HCT116 (cell line): ENCODE measurements at regions of chr11 and their contacts with region 1.

Region 1: DNA sequence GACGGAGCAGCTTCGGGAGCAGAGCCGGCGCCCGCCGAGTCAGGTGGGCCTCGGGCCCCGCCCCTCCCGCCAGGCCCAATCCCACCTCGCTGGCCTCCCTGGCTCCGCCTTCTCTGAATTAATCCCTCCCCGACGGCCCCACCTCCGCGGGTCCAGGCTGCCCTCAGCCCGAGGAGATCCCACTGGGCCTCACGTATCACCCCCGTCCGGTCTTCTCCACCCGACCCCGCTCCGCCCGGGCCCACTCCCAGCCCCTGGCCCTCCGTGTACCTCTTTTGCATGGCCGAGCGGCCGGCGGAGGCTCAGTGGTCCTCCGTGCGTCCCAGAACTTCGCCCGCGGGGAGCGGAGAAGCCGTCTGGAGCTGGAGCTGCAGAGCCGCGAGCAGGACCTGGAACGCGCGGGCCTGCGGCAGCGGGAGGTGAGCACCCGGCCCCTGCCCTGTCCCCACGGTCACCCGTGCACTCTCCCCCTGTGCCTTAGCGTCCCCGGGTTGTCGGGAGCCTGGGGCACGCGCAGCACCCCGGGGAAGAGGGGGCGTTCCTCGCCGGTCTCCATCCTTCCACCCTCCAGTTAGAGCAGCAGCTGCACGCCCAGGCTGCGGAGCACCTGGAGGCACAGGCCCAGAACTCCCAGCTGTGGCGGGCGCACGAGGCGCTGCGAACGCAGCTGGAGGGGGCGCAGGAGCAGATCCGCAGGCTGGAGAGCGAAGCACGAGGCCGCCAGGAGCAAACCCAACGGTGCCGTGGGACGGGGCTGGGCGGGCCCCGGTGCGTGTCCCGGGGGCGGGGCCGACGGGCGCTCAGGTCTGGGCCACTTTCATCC is 2.2 kb upstream of the CD151 start:
- DNase-seq: no peak
- ATAC-seq: no peak
- H3K4me3 ChIP-seq: no peak overlapping the region
- H3K27ac ChIP-seq: no peak overlapping the region; the same call in 1 of the 2 replicates
- H3K4me1 ChIP-seq: peaks cover 35 to 62% of the 10 kb centered on the region in 2 experiments
- H3K27me3 ChIP-seq: no peaks in the 10 kb centered on the region
- CTCF ChIP-seq: no peak
- POLR2A ChIP-seq: no peak
- RAD21 ChIP-seq: no peak

Region 2: DNA sequence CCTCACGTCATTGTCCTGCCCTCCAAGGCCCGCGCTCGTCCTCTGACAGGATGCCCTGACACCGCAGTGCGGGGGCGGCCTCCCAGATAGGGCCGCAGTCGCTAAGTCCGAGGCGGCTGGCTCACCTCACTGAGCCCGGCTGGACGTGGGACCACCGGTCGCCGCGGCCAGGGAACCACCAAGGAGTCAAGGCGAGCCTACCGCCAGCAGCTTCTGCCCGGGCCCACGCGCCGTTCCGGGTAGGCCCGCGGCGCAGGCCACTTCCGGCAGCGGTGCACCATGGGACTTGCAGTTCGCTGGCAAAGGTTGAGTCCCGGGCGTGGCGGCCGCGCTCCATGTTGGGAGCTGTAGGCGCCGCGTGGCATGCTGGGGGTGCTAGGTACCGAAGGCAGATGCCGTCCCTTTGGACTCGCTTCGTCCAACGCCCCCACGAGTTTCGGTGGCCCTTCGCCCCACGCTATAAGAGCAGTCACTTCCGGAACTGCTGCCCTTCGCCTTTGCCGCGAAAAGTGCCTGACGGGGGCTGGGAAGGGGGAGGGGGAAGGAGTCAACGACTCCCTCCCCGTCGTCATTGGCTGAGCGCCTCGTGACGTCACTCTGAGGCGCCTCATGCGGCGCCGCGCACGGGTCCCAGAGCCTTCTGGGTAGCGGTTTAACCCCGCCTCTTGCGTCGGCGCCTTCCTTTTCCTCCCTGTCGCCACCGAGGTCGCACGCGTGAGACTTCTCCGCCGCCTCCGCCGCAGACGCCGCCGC is 21.0 kb before region 1 on chr11 and contains the start of gene RPLP2:
- CTCF ChIA-PET with region 1: no interaction called
- POLR2A ChIA-PET with region 1: interaction called, 17 read pairs
- RAD21 ChIA-PET with region 1: no interaction called
- intact Hi-C with region 1: no loop called
- DNase-seq: peak; percentile 93
- ATAC-seq: peak; percentile 69
- H3K4me3 ChIP-seq: peak within 1 kb of the TSS; percentile 82 to 97
- H3K27ac ChIP-seq: peak within 1 kb of the TSS; percentile 93
- H3K4me1 ChIP-seq: peaks cover 19 to 55% of the 10 kb centered on the region in 2 experiments
- H3K27me3 ChIP-seq: no peaks in the 10 kb centered on the region
- CTCF ChIP-seq: no peak
- POLR2A ChIP-seq: peak; percentile 48
- RAD21 ChIP-seq: no peak
- total RNA-seq, gene RPLP2: 3,615 TPM

Region 3: DNA sequence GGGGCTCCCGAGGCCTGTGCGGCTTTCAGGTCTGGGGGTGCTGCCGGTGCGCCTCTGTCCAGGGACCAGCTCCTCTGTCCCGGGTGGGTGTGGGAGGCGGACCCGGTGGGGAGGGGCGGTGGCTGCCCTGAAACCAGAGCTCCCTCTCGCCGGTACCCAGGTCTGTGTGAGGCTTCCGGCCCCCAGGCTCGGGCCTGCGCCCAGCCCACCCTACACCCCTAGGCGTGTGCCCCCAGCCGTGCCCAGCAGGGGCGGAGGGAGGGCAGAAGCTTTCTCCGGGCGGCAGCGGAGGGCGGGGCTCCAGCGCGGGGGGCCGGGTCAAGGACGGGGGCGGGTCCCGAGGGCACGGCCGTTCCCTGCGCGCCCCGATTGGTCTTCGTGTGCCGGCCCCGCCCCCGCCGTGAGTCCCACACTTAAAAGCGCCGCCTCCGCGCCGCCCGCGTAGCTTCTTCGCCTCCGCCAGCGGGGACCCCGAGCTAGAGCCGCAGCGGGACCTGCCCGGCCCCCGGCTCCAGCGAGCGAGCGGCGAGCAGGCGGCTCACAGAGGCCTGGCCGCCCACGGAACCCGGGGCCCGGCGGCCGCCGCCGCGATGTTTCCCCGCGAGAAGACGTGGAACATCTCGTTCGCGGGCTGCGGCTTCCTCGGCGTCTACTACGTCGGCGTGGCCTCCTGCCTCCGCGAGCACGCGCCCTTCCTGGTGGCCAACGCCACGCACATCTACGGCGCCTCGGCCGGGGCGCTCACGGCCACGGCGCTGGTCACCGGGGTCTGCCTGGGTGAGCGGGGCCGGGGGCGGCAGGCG is 11.2 kb before region 1 on chr11:
- CTCF ChIA-PET with region 1: no interaction called
- POLR2A ChIA-PET with region 1: interaction called, 26 read pairs
- RAD21 ChIA-PET with region 1: no interaction called
- intact Hi-C with region 1: no loop called
- DNase-seq: no peak
- ATAC-seq: peak; percentile 75
- H3K4me3 ChIP-seq: peak overlapping the region; percentile 65 to 77
- H3K27ac ChIP-seq: peak overlapping the region; percentile 81; the same call in 1 of the 2 replicates
- H3K4me1 ChIP-seq: peaks cover 26 to 40% of the 10 kb centered on the region in 2 experiments
- H3K27me3 ChIP-seq: no peaks in the 10 kb centered on the region
- CTCF ChIP-seq: no peak
- POLR2A ChIP-seq: peak; percentile 86
- RAD21 ChIP-seq: no peak